Posterior vena cava (tissue), 2 donors: ENCODE measurements at regions of chr15 and their contacts with region 1.

Region 1: DNA sequence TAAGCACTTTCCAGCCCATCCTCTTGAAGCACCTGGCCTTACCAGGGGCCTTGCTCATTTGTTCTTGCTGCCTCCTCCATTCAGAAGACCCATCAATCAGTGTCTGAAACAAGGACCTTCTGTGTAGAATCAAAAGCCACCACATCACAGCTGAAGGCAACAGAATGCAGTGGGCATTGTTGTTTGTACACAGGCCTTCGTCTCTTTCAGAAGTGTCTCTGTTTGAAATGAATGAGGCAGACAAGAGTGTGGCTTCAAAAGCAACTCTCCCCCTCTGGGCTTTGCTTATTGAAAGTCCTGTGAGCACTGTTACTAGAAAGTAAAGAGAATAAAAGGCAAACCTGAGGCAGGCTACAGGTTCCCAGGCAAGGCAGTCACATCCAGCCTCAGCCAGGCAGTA is 24.4 kb upstream of the LIPC start:
- DNase-seq: no peak

Region 2: GRCh38 chr15:58690703-58691102 is 283.3 kb after region 1 on chr15:
- intact Hi-C with region 1: no loop called
- DNase-seq: no peak

Region 3: GRCh38 chr15:60351066-60351465 is 1943.7 kb after region 1 on chr15:
- intact Hi-C with region 1: loop called in 1 of 2 experiments (anchors 5 kb)
- DNase-seq: no peak